Activated B cell treated with CpG ODN at 0.5 μM for 24 hours (primary cell): ENCODE measurements at regions of chr10 and their contacts with region 1.

Region 1: DNA sequence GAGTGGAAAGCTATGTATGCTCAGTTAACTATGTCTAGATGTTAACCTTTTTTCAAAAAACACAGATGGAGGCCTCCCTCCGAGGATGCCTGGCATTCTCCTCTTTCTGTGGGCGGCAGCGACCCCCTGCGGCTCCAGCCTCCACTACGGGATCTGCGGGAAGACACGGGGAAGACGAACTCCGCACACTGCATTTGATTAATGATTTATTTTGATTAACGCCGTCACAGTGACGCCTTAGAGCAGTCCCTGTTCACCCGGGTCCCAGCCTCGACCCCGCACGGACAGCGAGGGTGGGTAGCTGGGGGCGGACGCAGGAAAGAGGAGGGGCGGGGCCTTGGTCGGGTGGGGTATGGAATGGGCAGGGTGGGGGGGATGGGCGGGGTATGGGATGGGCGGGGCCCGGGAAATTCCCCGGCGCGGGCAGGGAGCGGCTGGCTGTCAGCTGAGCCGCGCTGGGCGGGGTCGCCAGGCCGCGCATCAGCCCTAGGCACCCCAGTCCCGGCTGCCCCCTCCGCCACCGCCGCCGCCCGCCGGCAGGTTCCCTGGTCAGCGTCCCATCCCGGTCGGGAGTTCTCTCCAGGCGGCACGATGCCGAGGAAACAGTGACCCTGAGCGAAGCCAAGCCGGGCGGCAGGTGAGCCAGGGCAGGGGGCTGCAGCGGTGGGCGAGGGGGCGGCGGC is at the start of gene OPTN:
- DNase-seq: peak; percentile 71
- ATAC-seq: peak; percentile 81
- H3K4me3 Mint-ChIP-seq: peak within 1 kb of the TSS; percentile 92
- H3K27ac Mint-ChIP-seq: peak within 1 kb of the TSS; percentile 84
- H3K4me1 Mint-ChIP-seq: peaks cover 15% of the 10 kb centered on the region
- H3K27me3 Mint-ChIP-seq: no peaks in the 10 kb centered on the region
- CTCF ChIP-seq: no peak
- total RNA-seq, gene OPTN: 34.9 and 35.4 TPM in 2 replicates

Region 2: GRCh38 chr10:11782793-11783557 is 1316.8 kb before region 1 on chr10:
- CTCF ChIA-PET with region 1: no interaction called
- POLR2A ChIA-PET with region 1: no interaction called
- intact Hi-C with region 1: loop called (anchors 10 kb)
- DNase-seq: no peak
- ATAC-seq: peak; percentile 40
- H3K4me3 Mint-ChIP-seq: no peak overlapping the region
- H3K27ac Mint-ChIP-seq: no peak overlapping the region
- H3K4me1 Mint-ChIP-seq: no peaks in the 10 kb centered on the region
- H3K27me3 Mint-ChIP-seq: peaks cover 5% of the 10 kb centered on the region
- CTCF ChIP-seq: no peak

Region 3: DNA sequence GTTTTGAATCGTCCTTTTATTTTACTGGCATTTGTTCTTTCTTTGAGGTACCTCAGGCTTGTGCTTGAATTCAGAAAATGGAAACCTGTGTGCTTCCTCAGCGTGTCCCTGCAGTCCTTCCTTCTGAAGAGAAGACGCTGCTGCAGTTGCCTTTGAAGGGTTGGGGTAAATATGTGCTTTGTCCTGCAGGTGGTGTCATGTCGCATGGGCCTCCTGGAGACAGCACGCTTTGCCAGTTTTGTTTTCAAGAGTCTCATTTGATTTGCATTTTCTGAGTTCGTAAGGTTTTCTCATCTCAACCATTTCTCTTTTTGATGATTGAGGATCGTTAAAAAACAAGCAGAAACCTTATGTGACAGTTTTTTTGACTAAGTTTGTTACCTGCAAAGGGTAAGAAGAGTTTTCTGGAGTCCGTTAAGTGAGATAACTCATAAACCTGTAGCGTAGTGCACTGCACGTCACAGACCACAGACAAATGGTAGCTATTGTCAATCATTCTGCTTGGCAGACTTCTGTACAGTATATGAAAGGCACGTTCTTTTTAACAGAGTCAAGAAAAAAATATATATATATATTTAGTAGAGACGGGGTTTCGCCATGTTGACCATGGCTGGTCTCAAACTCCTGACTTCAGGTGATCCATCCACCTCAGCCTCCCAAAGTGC is 846.8 kb before region 1 on chr10:
- CTCF ChIA-PET with region 1: no interaction called
- POLR2A ChIA-PET with region 1: no interaction called
- intact Hi-C with region 1: loop called (anchors 2 kb)
- DNase-seq: no peak
- ATAC-seq: peak; percentile 98
- H3K4me3 Mint-ChIP-seq: peak overlapping the region; percentile 55
- H3K27ac Mint-ChIP-seq: peak overlapping the region; percentile 74
- H3K4me1 Mint-ChIP-seq: peaks cover 10% of the 10 kb centered on the region
- H3K27me3 Mint-ChIP-seq: no peaks in the 10 kb centered on the region
- CTCF ChIP-seq: peak; percentile 21

Region 4: DNA sequence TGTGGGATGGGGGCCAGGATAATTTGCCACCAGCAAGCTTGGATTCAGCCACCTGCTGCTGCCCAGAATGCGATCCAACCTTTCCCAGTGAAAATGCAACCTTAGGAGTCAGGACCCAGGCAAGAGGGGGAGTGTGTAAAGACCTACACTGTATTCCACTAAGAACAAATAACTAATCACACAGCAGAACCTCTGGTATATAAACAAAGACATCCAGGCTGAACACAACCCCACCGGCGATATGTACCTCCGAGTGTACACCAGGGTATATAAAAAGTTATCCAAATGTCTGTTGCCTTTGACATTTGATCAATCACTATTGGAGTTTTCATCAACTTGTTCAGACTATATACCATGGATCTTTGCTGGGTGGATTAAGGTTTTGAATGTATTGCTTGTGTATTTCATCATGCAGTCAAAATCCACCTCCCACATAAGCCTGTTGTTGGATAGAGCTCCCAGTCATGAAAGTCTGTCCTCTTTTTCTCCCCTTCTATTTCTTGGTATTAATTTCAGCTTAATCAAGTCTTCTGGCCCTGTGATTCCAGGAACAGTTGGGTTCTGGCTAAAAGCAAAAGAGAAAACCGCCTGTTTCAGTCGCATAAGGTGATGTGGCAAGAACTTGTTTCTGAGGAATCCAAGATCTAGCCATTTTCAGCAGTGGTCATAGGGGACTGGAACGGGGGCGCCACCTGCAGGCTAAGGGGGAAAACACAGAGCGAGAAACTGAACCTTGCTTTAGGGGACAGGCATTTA is 389.0 kb before region 1 on chr10:
- CTCF ChIA-PET with region 1: no interaction called
- POLR2A ChIA-PET with region 1: no interaction called
- intact Hi-C with region 1: loop called (anchors 1 kb)
- DNase-seq: peak; percentile 68
- ATAC-seq: peak; percentile 93
- H3K4me3 Mint-ChIP-seq: no peak overlapping the region
- H3K27ac Mint-ChIP-seq: peak overlapping the region; percentile 54
- H3K4me1 Mint-ChIP-seq: peaks cover 23% of the 10 kb centered on the region
- H3K27me3 Mint-ChIP-seq: no peaks in the 10 kb centered on the region
- CTCF ChIP-seq: no peak

Region 5: GRCh38 chr10:12902135-12902572 is 197.7 kb before region 1 on chr10:
- CTCF ChIA-PET with region 1: no interaction called
- POLR2A ChIA-PET with region 1: no interaction called
- intact Hi-C with region 1: loop called (anchors 2 kb)
- DNase-seq: peak; percentile 18
- ATAC-seq: no peak
- H3K4me3 Mint-ChIP-seq: no peak overlapping the region
- H3K27ac Mint-ChIP-seq: no peak overlapping the region
- H3K4me1 Mint-ChIP-seq: no peaks in the 10 kb centered on the region
- H3K27me3 Mint-ChIP-seq: peaks cover 23% of the 10 kb centered on the region
- CTCF ChIP-seq: peak; percentile 82

Region 6: DNA sequence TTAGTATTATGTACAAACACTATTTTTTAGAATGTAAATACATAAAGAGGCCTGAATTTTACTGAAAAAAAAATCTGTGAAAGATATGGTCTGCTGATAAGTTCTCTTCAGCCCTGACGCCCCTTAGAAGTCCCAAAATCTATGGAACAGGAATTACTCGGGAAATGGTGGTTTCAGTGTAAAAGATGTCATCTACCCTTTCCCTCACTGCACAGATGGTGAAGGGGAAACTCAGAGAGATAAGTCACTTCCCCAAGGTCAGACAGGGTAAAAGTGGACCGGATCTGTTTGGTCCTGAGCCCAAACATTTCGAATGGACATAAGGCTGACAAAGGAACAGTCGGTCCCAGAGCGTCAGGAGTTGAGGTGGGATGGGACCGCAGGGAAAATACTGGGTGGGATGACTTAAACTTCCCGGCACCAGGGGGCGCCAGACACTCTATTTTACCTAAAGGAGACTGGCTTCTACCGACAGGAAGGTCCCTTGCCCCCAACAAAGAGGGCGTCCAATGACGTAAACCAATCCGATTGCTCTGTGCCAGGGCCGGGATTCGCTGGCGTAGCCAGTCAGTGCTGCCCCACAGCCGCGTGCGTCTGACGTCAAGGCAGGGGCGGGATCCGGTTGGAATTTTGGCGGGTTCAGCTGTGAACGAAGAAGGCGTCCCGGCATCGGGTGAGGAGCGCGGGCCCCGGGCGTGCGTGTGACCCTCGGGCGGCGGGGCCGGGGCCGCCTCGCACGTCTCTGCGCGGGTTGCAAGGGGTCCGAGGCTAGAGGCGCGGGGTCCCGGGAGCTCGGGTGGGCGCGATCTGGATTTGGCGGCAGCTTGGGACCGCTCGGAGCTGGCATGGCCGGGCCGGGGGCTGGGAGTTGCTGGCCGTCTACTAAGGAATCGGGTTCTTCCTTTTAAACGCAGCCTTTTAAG is 61.4 kb after region 1 on chr10 and contains the start of gene MCM10:
- CTCF ChIA-PET with region 1: no interaction called
- POLR2A ChIA-PET with region 1: no interaction called
- intact Hi-C with region 1: loop called (anchors 1 kb)
- DNase-seq: peak; percentile 88
- ATAC-seq: peak; percentile 100
- H3K4me3 Mint-ChIP-seq: peak within 1 kb of the TSS; percentile 89
- H3K27ac Mint-ChIP-seq: peak within 1 kb of the TSS; percentile 43
- H3K4me1 Mint-ChIP-seq: peaks cover 14% of the 10 kb centered on the region
- H3K27me3 Mint-ChIP-seq: no peaks in the 10 kb centered on the region
- CTCF ChIP-seq: peak; percentile 77
- total RNA-seq, gene MCM10: 3.7 and 4.6 TPM in 2 replicates

Region 7: DNA sequence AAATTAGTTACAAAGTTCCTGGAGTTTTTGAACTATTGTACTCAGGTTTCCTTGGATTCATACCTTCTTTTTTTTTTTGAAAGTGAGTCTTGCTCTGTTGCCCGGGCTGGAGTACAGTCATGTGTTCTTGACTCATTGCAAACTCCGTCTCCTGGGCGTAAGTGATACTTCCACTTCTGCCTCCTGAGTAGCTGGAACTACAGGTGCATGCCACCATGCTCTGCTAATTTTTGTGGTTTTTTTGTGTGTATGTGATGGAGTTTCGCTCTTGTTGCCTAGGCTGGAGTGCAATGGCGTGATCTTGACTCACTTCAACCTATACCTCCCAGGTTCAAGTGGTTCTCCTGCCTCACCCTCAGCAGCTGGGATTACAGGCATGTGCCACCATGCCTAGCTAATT is 83.8 kb after region 1 on chr10:
- CTCF ChIA-PET with region 1: no interaction called
- POLR2A ChIA-PET with region 1: no interaction called
- intact Hi-C with region 1: no loop called
- DNase-seq: no peak
- ATAC-seq: peak; percentile 60
- H3K4me3 Mint-ChIP-seq: no peak overlapping the region
- H3K27ac Mint-ChIP-seq: peak overlapping the region; percentile 32
- H3K4me1 Mint-ChIP-seq: peaks cover 5% of the 10 kb centered on the region
- H3K27me3 Mint-ChIP-seq: no peaks in the 10 kb centered on the region
- CTCF ChIP-seq: no peak

Region 8: DNA sequence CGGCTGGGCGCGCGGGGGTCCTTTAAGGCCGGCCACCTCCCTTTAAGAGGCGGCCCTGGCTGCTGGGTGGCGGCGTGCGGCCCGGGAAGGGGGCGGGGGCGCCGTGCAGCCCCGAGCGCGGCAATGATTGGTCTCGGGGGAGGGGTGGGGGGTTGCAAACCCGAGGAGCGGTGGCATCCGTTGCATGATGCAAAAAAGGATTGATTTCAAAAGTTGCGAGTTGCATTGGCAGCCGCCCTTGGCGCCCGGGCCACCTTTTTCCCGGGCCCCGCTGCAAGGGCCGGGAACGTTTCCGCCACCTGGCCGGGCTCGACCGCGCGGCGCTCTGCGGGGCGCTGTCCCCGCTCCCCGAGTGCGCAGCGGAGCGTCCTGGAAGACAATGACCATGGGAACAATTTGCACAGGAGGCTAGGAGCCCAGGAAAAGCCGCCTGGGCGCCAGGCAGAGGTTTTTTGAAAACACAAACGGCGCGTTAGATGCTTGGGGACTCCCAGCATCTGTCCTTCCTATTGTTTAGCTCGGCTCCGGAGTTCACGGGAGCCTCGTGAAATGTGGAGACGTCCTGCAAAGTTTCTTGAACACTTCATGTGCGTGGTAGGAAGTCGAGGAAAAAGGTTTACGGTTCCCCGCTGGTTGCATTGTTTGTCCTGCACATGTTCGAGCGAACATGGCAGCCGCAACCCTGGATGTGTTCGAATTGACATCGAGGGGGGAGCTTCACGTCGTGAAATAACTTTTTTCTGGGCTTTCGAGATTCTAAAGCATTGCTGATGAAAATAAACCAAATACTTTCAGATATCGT is 248.6 kb after region 1 on chr10 and contains the start of gene SEPHS1:
- CTCF ChIA-PET with region 1: no interaction called
- POLR2A ChIA-PET with region 1: interaction called, 3 read pairs
- intact Hi-C with region 1: loop called (anchors 1 kb)
- DNase-seq: peak; percentile 65
- ATAC-seq: peak; percentile 66
- H3K4me3 Mint-ChIP-seq: peak within 1 kb of the TSS; percentile 89
- H3K27ac Mint-ChIP-seq: peak within 1 kb of the TSS; percentile 88
- H3K4me1 Mint-ChIP-seq: peaks cover 59% of the 10 kb centered on the region
- H3K27me3 Mint-ChIP-seq: peaks cover 8% of the 10 kb centered on the region
- CTCF ChIP-seq: no peak
- total RNA-seq, gene SEPHS1: 36.7 and 38.0 TPM in 2 replicates